ENCODE measurements at regions of chr7 and their contacts with region 1.

Region 1: DNA sequence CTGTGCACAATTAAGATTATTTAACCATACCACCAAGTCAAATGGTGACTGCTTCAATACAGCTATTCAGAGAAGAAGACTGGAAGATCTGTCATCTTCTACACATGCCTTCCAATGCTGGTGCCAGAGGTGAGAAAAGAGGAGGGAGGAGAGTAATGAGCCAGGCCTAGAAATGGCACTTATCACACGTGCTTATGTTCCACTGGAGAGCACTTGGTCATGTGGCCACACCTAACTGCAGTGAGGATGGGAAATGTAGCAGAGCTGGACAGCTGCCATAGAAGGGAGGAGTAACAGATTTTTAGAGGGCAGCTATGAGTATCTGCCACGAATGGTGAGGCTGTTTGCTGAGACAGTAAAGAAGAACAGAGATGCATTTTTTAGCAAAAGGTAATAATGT is 77.1 kb downstream of the MPLKIP start:
- DNase-seq: peak in 2 of 4 experiments; percentile 18 to 65
- ATAC-seq: peak; percentile 83
- H3K4me3 ChIP-seq: no peak overlapping the region
- H3K27ac ChIP-seq: no peak overlapping the region
- H3K4me1 ChIP-seq: peaks cover 0 to 17% of the 10 kb centered on the region in 2 experiments; a peak in 2 of 5 replicates
- H3K27me3 ChIP-seq: no peaks in the 10 kb centered on the region
- CTCF ChIP-seq: no peak
- EP300 ChIP-seq: no peak
- POLR2A ChIP-seq: no peak
- RAD21 ChIP-seq: no peak

Region 2: DNA sequence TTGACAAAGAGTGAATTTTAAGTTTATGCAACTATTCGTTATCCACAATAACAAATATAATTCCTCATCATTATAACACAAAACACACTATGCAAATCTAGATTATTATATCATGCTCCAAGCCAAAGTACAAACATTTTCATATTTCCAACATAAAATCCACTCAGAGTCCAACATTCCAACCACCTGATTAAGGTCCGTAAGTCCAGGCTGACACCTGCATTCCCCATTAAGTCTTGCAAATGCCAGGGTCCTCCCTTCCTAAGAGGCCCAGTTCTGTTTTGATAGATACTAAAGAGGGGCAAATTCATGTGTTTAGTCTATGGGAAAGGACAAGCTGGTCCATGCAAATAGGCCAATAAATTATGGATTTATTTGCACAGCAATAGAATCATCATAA is 873.5 kb before region 1 on chr7:
- CTCF ChIA-PET with region 1: no interaction called
- POLR2A ChIA-PET with region 1: no interaction called
- in situ Hi-C with region 1: no loop called
- intact Hi-C with region 1: no loop called
- DNase-seq: no peak
- ATAC-seq: no peak
- H3K4me3 ChIP-seq: no peak overlapping the region
- H3K27ac ChIP-seq: no peak overlapping the region
- H3K4me1 ChIP-seq: no peaks in the 10 kb centered on the region
- H3K27me3 ChIP-seq: peaks cover 2 to 11% of the 10 kb centered on the region in 2 experiments; a peak in 4 of 5 replicates
- CTCF ChIP-seq: no peak
- EP300 ChIP-seq: no peak
- POLR2A ChIP-seq: no peak
- RAD21 ChIP-seq: no peak

Region 3: GRCh38 chr7:39580149-39580874 is 477.0 kb before region 1 on chr7:
- CTCF ChIA-PET with region 1: no interaction called
- POLR2A ChIA-PET with region 1: interaction called, 4 read pairs
- in situ Hi-C with region 1: loop called (anchors 10 kb)
- intact Hi-C with region 1: loop called (anchors 1 kb)
- DNase-seq: peak; percentile 78 to 94 (median 79)
- ATAC-seq: peak; percentile 97
- H3K4me3 ChIP-seq: no peak overlapping the region
- H3K27ac ChIP-seq: no peak overlapping the region
- H3K4me1 ChIP-seq: peaks cover 0 to 2% of the 10 kb centered on the region in 2 experiments; a peak in 2 of 5 replicates
- H3K27me3 ChIP-seq: no peaks in the 10 kb centered on the region
- CTCF ChIP-seq: peak; percentile 77 to 95 (median 90)
- EP300 ChIP-seq: no peak
- POLR2A ChIP-seq: no peak
- RAD21 ChIP-seq: peak; percentile 96 to 99

Region 4: GRCh38 chr7:39811161-39811614 is 246.1 kb before region 1 on chr7:
- CTCF ChIA-PET with region 1: no interaction called
- POLR2A ChIA-PET with region 1: no interaction called
- in situ Hi-C with region 1: no loop called
- intact Hi-C with region 1: loop called (anchors 5 kb)
- DNase-seq: peak in 2 of 4 experiments; percentile 50 to 74
- ATAC-seq: peak; percentile 33
- H3K4me3 ChIP-seq: no peak overlapping the region
- H3K27ac ChIP-seq: no peak overlapping the region
- H3K4me1 ChIP-seq: peaks cover 8 to 12% of the 10 kb centered on the region in 2 experiments; a peak in 3 of 5 replicates
- H3K27me3 ChIP-seq: peaks cover 5 to 11% of the 10 kb centered on the region in 2 experiments; a peak in 2 of 5 replicates
- CTCF ChIP-seq: no peak
- EP300 ChIP-seq: no peak
- POLR2A ChIP-seq: no peak
- RAD21 ChIP-seq: no peak

Region 5: GRCh38 chr7:39894904-39895303 is 162.4 kb before region 1 on chr7:
- CTCF ChIA-PET with region 1: interaction called, 18 read pairs
- POLR2A ChIA-PET with region 1: interaction called, 3 read pairs
- in situ Hi-C with region 1: loop called (anchors 5 kb)
- intact Hi-C with region 1: loop called (anchors 1 kb)
- DNase-seq: no peak
- ATAC-seq: no peak
- H3K4me3 ChIP-seq: no peak overlapping the region
- H3K27ac ChIP-seq: no peak overlapping the region
- H3K4me1 ChIP-seq: no peaks in the 10 kb centered on the region
- H3K27me3 ChIP-seq: peaks cover 2 to 25% of the 10 kb centered on the region in 2 experiments; a peak in 4 of 5 replicates
- CTCF ChIP-seq: no peak
- EP300 ChIP-seq: no peak
- POLR2A ChIP-seq: no peak
- RAD21 ChIP-seq: no peak

Region 6: DNA sequence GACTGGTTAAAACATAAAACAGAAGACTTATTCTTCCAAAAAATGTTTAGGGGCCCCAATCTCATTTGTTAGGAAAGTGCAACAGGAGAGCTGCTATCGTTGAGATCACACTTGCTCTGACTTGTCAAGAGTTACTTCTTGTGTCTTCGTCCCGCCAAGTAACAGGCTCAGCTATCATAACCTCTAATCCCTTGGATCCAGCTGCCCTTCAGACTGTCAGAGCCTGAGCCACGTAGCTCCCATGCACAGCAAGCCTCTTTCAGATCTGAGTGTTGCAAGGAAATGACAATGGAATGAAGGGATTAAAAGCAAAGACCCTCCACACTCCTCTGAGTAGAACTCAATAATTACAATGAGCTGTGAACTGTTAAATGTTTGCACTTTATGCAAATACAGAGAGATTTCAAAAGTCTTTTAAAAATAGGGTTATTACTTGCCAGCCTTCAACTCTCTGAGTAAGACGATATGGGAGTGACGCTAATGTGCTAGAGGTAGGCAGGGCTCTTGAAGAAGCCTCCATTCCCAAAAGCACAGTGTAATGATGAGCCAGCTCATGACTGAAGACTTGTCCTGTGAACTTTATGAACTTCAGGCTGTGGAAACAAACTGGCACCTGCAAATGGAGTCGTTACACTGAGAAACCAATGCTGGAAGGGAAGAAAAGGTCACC is 135.7 kb before region 1 on chr7:
- CTCF ChIA-PET with region 1: no interaction called
- POLR2A ChIA-PET with region 1: no interaction called
- in situ Hi-C with region 1: no loop called
- intact Hi-C with region 1: no loop called
- DNase-seq: peak in 2 of 4 experiments; percentile 12 to 25
- ATAC-seq: peak; percentile 67
- H3K4me3 ChIP-seq: no peak overlapping the region
- H3K27ac ChIP-seq: no peak overlapping the region
- H3K4me1 ChIP-seq: no peaks in the 10 kb centered on the region; a peak in 1 of 5 replicates
- H3K27me3 ChIP-seq: peaks cover 14 to 21% of the 10 kb centered on the region in 2 experiments
- CTCF ChIP-seq: no peak
- EP300 ChIP-seq: no peak
- POLR2A ChIP-seq: no peak
- RAD21 ChIP-seq: no peak

Region 7: GRCh38 chr7:39948956-39949928 is 108.0 kb before region 1 on chr7:
- CTCF ChIA-PET with region 1: interaction called, 5 read pairs
- POLR2A ChIA-PET with region 1: no interaction called
- in situ Hi-C with region 1: no loop called
- intact Hi-C with region 1: loop called (anchors 2 kb)
- DNase-seq: peak; percentile 88 to 98 (median 91)
- ATAC-seq: peak; percentile 84
- H3K4me3 ChIP-seq: peak overlapping the region; percentile 72
- H3K27ac ChIP-seq: peak overlapping the region; percentile 96
- H3K4me1 ChIP-seq: peaks cover 9 to 24% of the 10 kb centered on the region in 2 experiments
- H3K27me3 ChIP-seq: no peaks in the 10 kb centered on the region
- CTCF ChIP-seq: 0 out of 6 replicates have a peak, but pooled peaks of 1 of the 3 experiments have one; percentile 8
- EP300 ChIP-seq: peak; percentile 11; the same call in 1 of the 2 replicates
- POLR2A ChIP-seq: peak; percentile 97
- RAD21 ChIP-seq: no peak

Measured in K562 (cell line).